ENCODE measurements at regions of chr17 and their contacts with region 1.

Region 1: DNA sequence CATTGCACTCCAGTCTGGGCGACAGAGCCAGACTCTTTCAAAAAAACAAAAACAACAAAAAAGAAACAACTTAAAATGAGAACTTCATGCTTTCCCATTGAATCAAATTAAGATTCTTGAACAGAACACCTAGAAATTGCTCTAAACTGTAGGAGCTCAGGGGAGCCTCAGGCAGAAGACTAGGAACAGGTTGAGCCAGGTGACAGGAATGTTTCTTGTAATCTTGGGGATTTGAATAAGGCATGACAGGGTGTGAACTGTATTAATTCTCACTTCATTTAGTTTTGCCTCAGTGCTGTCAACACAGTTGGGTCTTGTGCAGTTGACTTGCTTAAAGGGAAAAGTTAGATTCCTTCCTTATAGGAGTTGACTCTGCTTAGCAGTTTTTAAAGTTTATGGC is 27.8 kb downstream of the SOCS7 start:
- DNase-seq: no peak
- ATAC-seq: no peak
- H3K4me3 ChIP-seq: no peak overlapping the region
- H3K27ac ChIP-seq: no peak overlapping the region
- H3K4me1 ChIP-seq: no peaks in the 10 kb centered on the region
- H3K27me3 ChIP-seq: no peaks in the 10 kb centered on the region
- CTCF ChIP-seq: no peak
- POLR2A ChIP-seq: no peak

Region 2: DNA sequence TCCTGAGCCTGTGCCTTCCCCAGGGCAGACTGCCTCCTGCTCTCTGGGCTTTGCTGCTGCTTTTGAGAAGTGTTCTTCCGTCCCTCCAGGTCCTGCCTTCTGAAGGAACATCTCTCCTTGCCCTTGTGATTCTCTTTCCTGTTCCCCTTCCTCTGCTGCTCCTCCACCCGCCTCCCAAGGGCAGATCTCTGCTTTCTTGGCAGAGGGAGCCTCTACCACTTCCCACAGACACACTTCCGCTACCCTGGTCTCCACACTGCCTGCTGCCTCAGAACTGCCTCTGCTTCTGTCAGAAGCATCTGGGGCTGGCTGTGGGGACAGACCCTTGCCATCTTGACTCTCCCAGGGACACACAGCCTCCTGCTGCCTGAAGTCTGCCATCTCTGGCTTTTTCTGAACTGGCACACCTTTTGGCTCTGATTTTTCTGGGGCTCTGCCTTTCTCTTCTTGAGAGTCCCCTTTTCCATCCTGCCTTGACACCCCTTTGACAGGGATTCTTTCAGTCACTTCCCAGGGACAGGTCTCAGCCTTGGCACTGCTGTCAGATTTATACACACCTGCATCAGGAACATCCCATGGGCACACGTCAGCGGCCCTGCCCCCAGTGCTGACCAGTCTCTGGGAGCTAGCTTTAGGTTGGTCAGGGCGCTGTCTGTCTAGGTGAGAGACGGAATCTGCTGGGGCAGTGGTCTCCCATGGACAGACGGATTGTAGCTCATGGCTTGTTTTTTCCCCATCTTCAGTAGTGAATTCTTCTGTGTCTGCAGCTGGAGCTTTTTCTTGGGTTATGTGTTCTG is 52.2 kb before region 1 on chr17:
- intact Hi-C with region 1: no loop called
- DNase-seq: peak in 4 of 5 donors; percentile 21 to 62 (median 41)
- ATAC-seq: peak in 3 of 4 donors; percentile 28 to 67 (median 66)
- H3K4me3 ChIP-seq: no peak overlapping the region
- H3K27ac ChIP-seq: peak overlapping the region in 2 of 12 donors; percentile 12 to 73
- H3K4me1 ChIP-seq: peaks cover 0 to 15% (median 0%) of the 10 kb centered on the region in 12 donors
- H3K27me3 ChIP-seq: peaks cover 0 to 14% (median 0%) of the 10 kb centered on the region in 9 donors
- CTCF ChIP-seq: no peak
- POLR2A ChIP-seq: no peak

Region 3: DNA sequence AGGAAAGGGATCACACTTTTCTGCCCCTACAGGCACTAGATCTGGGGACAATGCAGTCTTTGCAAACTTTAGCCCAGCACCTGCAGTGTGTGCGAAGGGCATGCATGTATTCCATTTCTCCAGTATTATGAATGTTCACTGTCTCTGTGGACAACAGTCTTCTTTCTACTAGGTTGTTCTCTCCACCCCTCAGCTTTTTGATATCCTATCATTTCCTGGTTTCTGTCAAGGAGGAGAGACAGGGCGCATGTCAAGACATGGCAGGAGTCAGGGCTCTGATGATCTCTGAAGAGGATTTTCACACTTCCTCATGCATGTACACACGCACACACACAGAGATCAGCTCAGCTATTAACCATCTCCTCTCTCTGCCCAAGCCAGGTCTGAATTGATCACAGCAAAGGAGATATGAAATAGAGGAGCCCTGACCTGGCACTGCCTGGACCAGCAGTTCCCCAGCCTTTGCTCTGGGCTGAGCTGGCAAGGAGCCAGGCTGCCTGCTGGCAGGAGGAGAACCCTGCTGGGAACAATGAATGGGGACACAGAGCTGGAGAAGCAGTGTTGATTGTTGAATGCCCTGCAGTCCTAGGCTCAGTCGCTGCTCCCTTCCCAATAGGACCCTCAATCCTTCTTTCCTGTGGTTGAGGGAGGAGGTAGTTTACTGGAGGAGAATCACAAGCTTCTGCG is 38.3 kb before region 1 on chr17:
- intact Hi-C with region 1: loop called in 3 of 10 experiments (anchors 5 kb)
- DNase-seq: peak; percentile 44 to 80 (median 78)
- ATAC-seq: peak; percentile 75 to 88 (median 83)
- H3K4me3 ChIP-seq: no peak overlapping the region
- H3K27ac ChIP-seq: no peak overlapping the region
- H3K4me1 ChIP-seq: peaks cover 0 to 8% (median 0%) of the 10 kb centered on the region in 12 donors
- H3K27me3 ChIP-seq: no peaks in the 10 kb centered on the region
- CTCF ChIP-seq: no peak
- POLR2A ChIP-seq: no peak

Measured in heart left ventricle (tissue), 16 donors.